Prostate gland (tissue), 2 donors: ENCODE measurements at regions of chr15 and their contacts with region 1.

Region 1: GRCh38 chr15:92881802-92882696 is 18.1 kb upstream of the CHD2 start:
- DNase-seq: peak; percentile 99
- H3K4me3 ChIP-seq: peak overlapping the region; percentile 27 to 97
- H3K27ac ChIP-seq: peak overlapping the region; percentile 100
- H3K4me1 ChIP-seq: no peaks in the 10 kb centered on the region
- H3K27me3 ChIP-seq: no peaks in the 10 kb centered on the region
- CTCF ChIP-seq: peak in 2 of 4 experiments; percentile 13 to 22
- POLR2A ChIP-seq: peak; percentile 96

Region 2: GRCh38 chr15:92831655-92832328 is 50.3 kb before region 1 on chr15:
- intact Hi-C with region 1: loop called (anchors 2 kb)
- DNase-seq: peak; percentile 95
- H3K4me3 ChIP-seq: peak overlapping the region; percentile 16 to 33
- H3K27ac ChIP-seq: peak overlapping the region; percentile 89 to 91
- H3K4me1 ChIP-seq: peaks cover 19% of the 10 kb centered on the region
- H3K27me3 ChIP-seq: no peaks in the 10 kb centered on the region
- CTCF ChIP-seq: peak in 2 of 4 experiments; percentile 1 to 5
- POLR2A ChIP-seq: peak; percentile 79

Region 3: GRCh38 chr15:92903941-92904831 is 22.1 kb after region 1 on chr15:
- intact Hi-C with region 1: loop called (anchors 2 kb)
- DNase-seq: peak; percentile 98
- H3K4me3 ChIP-seq: peak overlapping the region; percentile 55 to 63
- H3K27ac ChIP-seq: peak overlapping the region; percentile 98
- H3K4me1 ChIP-seq: peaks cover 7% of the 10 kb centered on the region
- H3K27me3 ChIP-seq: no peaks in the 10 kb centered on the region
- CTCF ChIP-seq: peak in 2 of 4 experiments; percentile 26 to 36
- POLR2A ChIP-seq: peak; percentile 93

Region 4: GRCh38 chr15:92917606-92918407 is 35.8 kb after region 1 on chr15:
- intact Hi-C with region 1: loop called (anchors 5 kb)
- DNase-seq: peak; percentile 98
- H3K4me3 ChIP-seq: no peak overlapping the region
- H3K27ac ChIP-seq: peak overlapping the region; percentile 88 to 91
- H3K4me1 ChIP-seq: peaks cover 29% of the 10 kb centered on the region
- H3K27me3 ChIP-seq: no peaks in the 10 kb centered on the region
- CTCF ChIP-seq: peak; percentile 94 to 100 (median 98)
- POLR2A ChIP-seq: no peak

Region 5: DNA sequence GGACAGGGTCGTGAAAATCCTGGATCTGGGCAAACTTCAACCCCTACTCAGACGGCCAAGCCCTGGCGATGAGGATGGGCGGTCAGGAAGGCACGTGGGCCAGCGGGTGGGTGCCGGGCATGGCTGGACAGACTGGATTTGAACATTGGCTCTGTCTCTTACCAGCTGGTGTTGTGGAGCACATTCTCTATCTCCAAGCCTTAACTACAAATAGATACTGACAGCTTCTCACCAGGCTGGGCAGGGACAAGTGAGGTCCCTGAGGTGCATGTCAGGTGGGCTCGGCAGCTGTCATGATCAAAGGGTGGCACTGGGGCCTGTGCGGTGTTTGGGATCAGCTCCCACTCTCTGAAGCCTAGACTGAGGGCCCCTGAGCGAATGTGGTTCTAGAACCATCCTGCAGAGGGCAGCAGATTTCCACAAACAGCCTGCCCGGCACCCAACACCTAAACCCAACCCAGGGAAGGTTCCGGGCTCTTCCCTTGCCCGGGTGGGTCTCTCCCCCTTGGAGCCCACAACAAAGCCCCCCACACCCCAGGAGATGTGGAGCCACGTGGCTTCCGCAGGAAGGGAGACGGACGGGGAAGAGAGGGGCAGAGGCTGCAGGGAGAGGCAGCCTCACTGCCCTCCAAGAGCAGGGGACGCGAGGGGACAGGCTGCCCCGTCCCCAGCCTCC is 148.5 kb after region 1 on chr15:
- intact Hi-C with region 1: no loop called
- DNase-seq: peak; percentile 77
- H3K4me3 ChIP-seq: no peak overlapping the region
- H3K27ac ChIP-seq: peak overlapping the region; percentile 8 to 59
- H3K4me1 ChIP-seq: peaks cover 31% of the 10 kb centered on the region
- H3K27me3 ChIP-seq: no peaks in the 10 kb centered on the region
- CTCF ChIP-seq: peak; percentile 72 to 89 (median 86)
- POLR2A ChIP-seq: no peak